WTC11 (cell line): ENCODE measurements at regions of chr12 and their contacts with region 1.

Region 1: GRCh38 chr12:49366652-49367380 is 446 bp upstream of the SPATS2 start:
- DNase-seq: peak; percentile 92
- ATAC-seq: peak; percentile 89
- H3K4me3 Mint-ChIP-seq: peak overlapping the region; percentile 89
- H3K27ac Mint-ChIP-seq: peak overlapping the region; percentile 97
- H3K4me1 Mint-ChIP-seq: peaks cover 30% of the 10 kb centered on the region
- H3K27me3 Mint-ChIP-seq: peaks cover 12% of the 10 kb centered on the region
- CTCF ChIP-seq: no peak

Region 2: GRCh38 chr12:49225556-49226181 is 141.1 kb before region 1 on chr12:
- CTCF ChIA-PET with region 1: no interaction called
- POLR2A ChIA-PET with region 1: no interaction called
- DNase-seq: no peak
- ATAC-seq: peak; percentile 77; the same call in 1 of the 2 replicates
- H3K4me3 Mint-ChIP-seq: no peak overlapping the region
- H3K27ac Mint-ChIP-seq: 0 out of 2 replicates have a peak overlapping the region, but pooled peaks have one; percentile 14
- H3K4me1 Mint-ChIP-seq: no peaks in the 10 kb centered on the region
- H3K27me3 Mint-ChIP-seq: no peaks in the 10 kb centered on the region
- CTCF ChIP-seq: no peak

Region 3: DNA sequence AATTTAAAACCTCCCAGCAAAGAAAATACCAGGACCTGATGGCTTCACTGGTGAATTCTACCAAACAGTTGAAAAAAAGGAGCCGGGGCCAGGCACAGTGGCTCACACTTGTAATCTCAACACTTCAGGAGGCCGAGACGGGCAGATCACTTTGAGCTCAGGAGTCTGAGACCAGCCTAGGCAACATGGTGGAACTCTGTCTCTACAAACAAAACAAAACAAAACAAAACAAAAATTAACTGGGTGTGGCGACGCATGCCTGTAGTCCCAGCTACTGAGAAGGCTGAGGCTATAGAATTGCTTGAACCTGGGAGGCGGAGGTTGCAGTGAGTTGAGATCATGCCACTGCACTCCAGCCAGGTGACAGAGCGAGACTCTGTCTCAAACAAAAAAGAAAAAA is 57.4 kb before region 1 on chr12:
- CTCF ChIA-PET with region 1: no interaction called
- POLR2A ChIA-PET with region 1: no interaction called
- DNase-seq: no peak
- ATAC-seq: no peak
- H3K4me3 Mint-ChIP-seq: no peak overlapping the region
- H3K27ac Mint-ChIP-seq: no peak overlapping the region
- H3K4me1 Mint-ChIP-seq: no peaks in the 10 kb centered on the region
- H3K27me3 Mint-ChIP-seq: peaks cover 45% of the 10 kb centered on the region
- CTCF ChIP-seq: no peak

Region 4: GRCh38 chr12:49336645-49337584 is 29.9 kb before region 1 on chr12 and contains the start of gene C1QL4:
- CTCF ChIA-PET with region 1: interaction called, 28 read pairs
- POLR2A ChIA-PET with region 1: interaction called, 8 read pairs
- DNase-seq: peak; percentile 93
- ATAC-seq: peak; percentile 55
- H3K4me3 Mint-ChIP-seq: peak within 1 kb of the TSS; percentile 70
- H3K27ac Mint-ChIP-seq: no peak within 1 kb of the TSS
- H3K4me1 Mint-ChIP-seq: peaks cover 56% of the 10 kb centered on the region
- H3K27me3 Mint-ChIP-seq: peaks cover 99% of the 10 kb centered on the region
- CTCF ChIP-seq: peak; percentile 97
- total RNA-seq, gene C1QL4: 0.92 to 1.2 TPM (median 1.2 TPM) in 3 replicates

Region 5: GRCh38 chr12:49388682-49389386 is 22.0 kb after region 1 on chr12:
- CTCF ChIA-PET with region 1: interaction called, 16 read pairs
- POLR2A ChIA-PET with region 1: interaction called, 7 read pairs
- DNase-seq: peak; percentile 91
- ATAC-seq: peak; percentile 99
- H3K4me3 Mint-ChIP-seq: peak overlapping the region; percentile 33; the same call in 1 of the 2 replicates
- H3K27ac Mint-ChIP-seq: peak overlapping the region; percentile 80; the same call in 1 of the 2 replicates
- H3K4me1 Mint-ChIP-seq: peaks cover 9% of the 10 kb centered on the region
- H3K27me3 Mint-ChIP-seq: no peaks in the 10 kb centered on the region
- CTCF ChIP-seq: peak; percentile 28; the same call in 1 of the 2 replicates

Region 6: DNA sequence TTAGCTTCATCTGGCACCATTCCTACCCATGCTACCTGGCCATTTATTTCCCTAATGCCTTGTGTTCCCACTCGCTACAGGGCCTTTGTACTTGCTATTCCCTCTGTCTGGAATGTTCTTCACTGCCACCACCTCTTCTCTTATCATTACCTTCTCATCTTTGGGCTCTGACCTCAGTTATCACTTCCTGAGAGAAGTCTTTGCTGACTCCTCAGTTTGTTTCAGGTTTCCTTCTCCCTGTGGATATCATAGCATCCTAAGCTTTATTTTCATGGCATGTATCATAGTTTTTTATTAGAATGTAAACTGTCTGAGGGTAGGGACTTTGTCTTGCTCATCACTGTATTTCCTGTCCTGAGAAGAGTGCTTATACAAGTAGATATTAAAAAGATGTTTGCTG is 30.2 kb after region 1 on chr12:
- CTCF ChIA-PET with region 1: interaction called, 12 read pairs
- POLR2A ChIA-PET with region 1: interaction called, 3 read pairs
- DNase-seq: no peak
- ATAC-seq: no peak
- H3K4me3 Mint-ChIP-seq: no peak overlapping the region
- H3K27ac Mint-ChIP-seq: peak overlapping the region; percentile 4; the same call in 1 of the 2 replicates
- H3K4me1 Mint-ChIP-seq: peaks cover 24% of the 10 kb centered on the region
- H3K27me3 Mint-ChIP-seq: no peaks in the 10 kb centered on the region
- CTCF ChIP-seq: no peak

Region 7: GRCh38 chr12:49515266-49515665 is 148.4 kb after region 1 on chr12:
- CTCF ChIA-PET with region 1: interaction called, 141 read pairs
- POLR2A ChIA-PET with region 1: interaction called, 5 read pairs
- DNase-seq: no peak
- ATAC-seq: no peak
- H3K4me3 Mint-ChIP-seq: no peak overlapping the region
- H3K27ac Mint-ChIP-seq: no peak overlapping the region; the same call in 1 of the 2 replicates
- H3K4me1 Mint-ChIP-seq: no peaks in the 10 kb centered on the region
- H3K27me3 Mint-ChIP-seq: no peaks in the 10 kb centered on the region
- CTCF ChIP-seq: no peak

Region 8: DNA sequence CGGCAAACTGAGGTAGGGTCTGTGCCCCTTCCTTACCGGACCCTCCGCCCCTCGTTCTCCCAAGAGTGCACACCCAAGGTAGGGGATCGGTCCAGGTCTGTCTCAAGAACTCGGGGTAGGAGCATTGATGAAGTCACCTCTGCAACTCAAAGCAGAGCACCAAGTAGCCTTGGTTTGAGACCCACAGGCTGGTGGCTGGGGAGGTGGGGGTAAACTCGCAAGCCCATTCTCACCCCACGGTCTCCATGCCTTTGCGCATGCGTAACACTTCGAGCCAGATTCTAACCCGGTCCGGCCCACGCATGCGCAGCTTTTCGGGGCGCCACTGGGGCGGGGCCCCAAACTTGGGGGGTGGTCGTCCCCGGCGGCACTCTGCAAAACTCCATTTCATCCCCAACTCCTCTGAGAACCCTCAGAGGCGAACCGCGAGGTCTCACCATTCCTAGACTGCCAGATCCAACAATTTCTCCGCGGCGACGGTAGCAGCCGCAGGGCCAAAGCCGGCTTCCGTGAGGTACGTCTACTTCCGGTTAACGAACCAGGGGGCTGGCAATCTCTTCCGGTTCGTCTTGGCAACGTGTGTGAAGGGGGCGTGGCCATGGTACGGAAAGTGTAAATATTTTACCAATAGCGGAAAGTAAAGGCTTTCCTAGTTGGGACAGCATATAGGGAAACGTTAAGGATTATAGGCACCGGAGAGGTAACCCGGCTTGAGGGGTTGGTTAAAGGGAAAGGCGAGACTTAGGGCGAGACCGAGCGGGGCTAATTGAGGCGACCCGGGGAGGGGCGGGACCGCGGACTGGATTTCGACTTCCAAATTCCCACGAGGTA is 201.0 kb after region 1 on chr12 and contains the start of gene MCRS1:
- CTCF ChIA-PET with region 1: no interaction called
- POLR2A ChIA-PET with region 1: no interaction called
- DNase-seq: peak; percentile 81
- ATAC-seq: peak; percentile 74
- H3K4me3 Mint-ChIP-seq: peak within 1 kb of the TSS; percentile 98
- H3K27ac Mint-ChIP-seq: peak within 1 kb of the TSS; percentile 99
- H3K4me1 Mint-ChIP-seq: peaks cover 12% of the 10 kb centered on the region
- H3K27me3 Mint-ChIP-seq: no peaks in the 10 kb centered on the region
- CTCF ChIP-seq: no peak
- total RNA-seq, gene MCRS1: 94.8 to 105 TPM (median 96.5 TPM) in 3 replicates